MCF 10A (cell line): ENCODE measurements at regions of chr14 and their contacts with region 1.

Region 1: GRCh38 chr14:21498553-21499526 is 12.3 kb downstream of the METTL3 start:
- DNase-seq: peak; percentile 44
- H3K4me3 Mint-ChIP-seq: no peak overlapping the region
- H3K27ac Mint-ChIP-seq: no peak overlapping the region
- H3K4me1 Mint-ChIP-seq: no peaks in the 10 kb centered on the region
- H3K27me3 Mint-ChIP-seq: no peaks in the 10 kb centered on the region
- CTCF ChIP-seq: peak; percentile 42

Region 2: GRCh38 chr14:21476925-21477681 is 21.7 kb before region 1 on chr14 and contains the starts of genes RAB2B and TOX4:
- CTCF ChIA-PET with region 1: interaction called, 57 read pairs
- POLR2A ChIA-PET with region 1: interaction called, 29 read pairs
- intact Hi-C with region 1: no loop called
- DNase-seq: peak; percentile 99
- H3K4me3 Mint-ChIP-seq: peak within 1 kb of the TSS; percentile 87
- H3K27ac Mint-ChIP-seq: peak within 1 kb of the TSS; percentile 98
- H3K4me1 Mint-ChIP-seq: no peaks in the 10 kb centered on the region
- H3K27me3 Mint-ChIP-seq: no peaks in the 10 kb centered on the region
- CTCF ChIP-seq: peak; percentile 90
- total RNA-seq, gene RAB2B: 22.8 and 23.3 TPM in 2 replicates
- total RNA-seq, gene TOX4: 84.1 and 105 TPM in 2 replicates

Region 3: GRCh38 chr14:21486640-21487087 is 12.2 kb before region 1 on chr14:
- CTCF ChIA-PET with region 1: interaction called, 28 read pairs
- POLR2A ChIA-PET with region 1: interaction called, 6 read pairs
- intact Hi-C with region 1: no loop called
- DNase-seq: no peak
- H3K4me3 Mint-ChIP-seq: no peak overlapping the region
- H3K27ac Mint-ChIP-seq: no peak overlapping the region
- H3K4me1 Mint-ChIP-seq: no peaks in the 10 kb centered on the region
- H3K27me3 Mint-ChIP-seq: no peaks in the 10 kb centered on the region
- CTCF ChIP-seq: no peak

Region 4: DNA sequence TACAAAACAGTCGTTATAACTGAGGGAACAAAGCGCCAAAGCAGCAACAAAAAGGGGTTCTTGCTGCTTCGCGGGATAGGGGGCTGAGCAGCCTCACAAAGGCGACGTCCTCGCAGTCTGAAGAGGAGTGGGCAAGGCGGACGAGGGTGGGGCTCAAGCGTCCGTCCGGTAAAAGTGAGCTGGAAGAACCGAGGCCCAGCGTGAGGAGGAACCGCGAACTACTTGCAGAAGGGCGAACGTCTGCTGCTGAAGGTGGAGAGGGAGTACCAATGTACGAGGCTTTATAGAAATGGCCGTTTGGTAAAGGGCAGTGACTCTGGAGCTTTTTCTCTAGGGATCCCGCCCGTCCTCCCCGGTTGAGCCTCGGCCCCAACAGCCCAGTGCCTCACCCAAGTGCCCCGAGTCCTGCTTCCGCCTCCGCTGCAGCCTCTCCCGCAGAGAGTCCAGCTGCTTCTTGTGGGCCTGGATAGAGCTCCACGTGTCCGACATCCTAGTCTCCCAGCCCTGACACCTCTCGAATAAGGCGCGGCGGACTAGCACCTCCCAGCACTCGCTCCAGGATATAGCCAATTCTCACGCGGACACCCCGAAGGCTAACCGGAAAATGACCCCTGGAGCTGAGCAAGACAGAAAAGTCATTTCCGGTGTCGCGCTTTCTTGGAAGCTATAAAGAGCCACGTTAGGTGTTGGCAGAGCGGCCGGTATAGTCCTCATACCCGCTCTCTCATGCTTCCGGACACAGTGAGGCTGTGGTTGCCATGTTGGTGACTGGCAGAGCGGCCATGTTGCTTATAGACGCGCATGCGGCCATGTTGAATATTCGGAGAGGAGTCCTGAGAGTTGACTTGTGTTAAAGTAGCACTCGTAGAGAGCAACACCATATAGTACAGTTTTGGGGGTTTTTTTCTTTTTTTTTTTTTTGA is 12.2 kb after region 1 on chr14 and contains the start of gene METTL3:
- CTCF ChIA-PET with region 1: interaction called, 57 read pairs
- POLR2A ChIA-PET with region 1: interaction called, 23 read pairs
- intact Hi-C with region 1: no loop called
- DNase-seq: peak; percentile 99
- H3K4me3 Mint-ChIP-seq: peak within 1 kb of the TSS; percentile 96
- H3K27ac Mint-ChIP-seq: peak within 1 kb of the TSS; percentile 95
- H3K4me1 Mint-ChIP-seq: peaks cover 13% of the 10 kb centered on the region
- H3K27me3 Mint-ChIP-seq: no peaks in the 10 kb centered on the region
- CTCF ChIP-seq: no peak
- total RNA-seq, gene METTL3: 36.4 and 46.7 TPM in 2 replicates

Region 5: DNA sequence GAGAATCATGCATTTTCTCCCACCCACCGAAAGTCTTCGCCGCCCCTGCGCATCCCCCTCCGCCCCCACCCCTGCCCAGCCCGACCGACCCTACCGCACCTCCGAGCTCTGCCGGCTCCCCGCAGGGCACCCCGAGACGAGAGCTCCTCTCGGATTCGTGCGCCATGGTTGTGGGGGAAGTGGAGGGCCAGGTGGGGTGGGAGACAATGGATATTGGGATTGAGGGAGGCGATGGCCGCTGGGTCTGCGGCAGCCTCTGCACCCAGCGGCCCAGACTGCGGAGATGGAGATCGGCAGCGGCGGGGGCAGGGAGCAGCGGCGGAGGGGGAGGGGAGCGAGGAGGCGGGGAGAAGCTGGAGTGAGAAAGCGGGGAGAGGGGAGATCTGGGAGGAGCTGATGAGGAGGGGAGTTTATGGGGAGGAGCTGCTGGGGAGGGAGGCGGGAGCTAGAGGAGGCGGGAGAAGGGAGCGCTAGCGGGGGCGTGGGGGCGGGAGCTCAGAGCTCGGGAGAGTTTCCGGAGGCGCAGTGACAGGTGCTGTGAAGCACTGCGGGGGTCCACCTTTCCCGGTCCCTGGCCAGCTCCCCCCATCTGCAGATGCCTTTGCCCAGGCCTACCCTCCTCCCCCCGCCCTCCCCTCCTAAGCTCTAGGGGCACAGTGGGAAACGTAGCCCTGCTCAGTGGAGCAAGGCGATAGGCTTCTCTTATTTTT is 27.3 kb after region 1 on chr14 and contains the start of gene SALL2:
- CTCF ChIA-PET with region 1: interaction called, 12 read pairs
- POLR2A ChIA-PET with region 1: no interaction called
- intact Hi-C with region 1: no loop called
- DNase-seq: no peak
- H3K4me3 Mint-ChIP-seq: peak within 1 kb of the TSS; percentile 33
- H3K27ac Mint-ChIP-seq: no peak within 1 kb of the TSS
- H3K4me1 Mint-ChIP-seq: no peaks in the 10 kb centered on the region
- H3K27me3 Mint-ChIP-seq: peaks cover 22% of the 10 kb centered on the region
- CTCF ChIP-seq: no peak
- total RNA-seq, gene SALL2: 0.05 and 0.09 TPM in 2 replicates

Region 6: GRCh38 chr14:21557084-21557901 is 58.5 kb after region 1 on chr14:
- CTCF ChIA-PET with region 1: interaction called, 88 read pairs
- POLR2A ChIA-PET with region 1: interaction called, 14 read pairs
- intact Hi-C with region 1: loop called (anchors 1 kb)
- DNase-seq: peak; percentile 84
- H3K4me3 Mint-ChIP-seq: peak overlapping the region; percentile 45
- H3K27ac Mint-ChIP-seq: no peak overlapping the region
- H3K4me1 Mint-ChIP-seq: peaks cover 7% of the 10 kb centered on the region
- H3K27me3 Mint-ChIP-seq: no peaks in the 10 kb centered on the region
- CTCF ChIP-seq: peak; percentile 70

Region 7: DNA sequence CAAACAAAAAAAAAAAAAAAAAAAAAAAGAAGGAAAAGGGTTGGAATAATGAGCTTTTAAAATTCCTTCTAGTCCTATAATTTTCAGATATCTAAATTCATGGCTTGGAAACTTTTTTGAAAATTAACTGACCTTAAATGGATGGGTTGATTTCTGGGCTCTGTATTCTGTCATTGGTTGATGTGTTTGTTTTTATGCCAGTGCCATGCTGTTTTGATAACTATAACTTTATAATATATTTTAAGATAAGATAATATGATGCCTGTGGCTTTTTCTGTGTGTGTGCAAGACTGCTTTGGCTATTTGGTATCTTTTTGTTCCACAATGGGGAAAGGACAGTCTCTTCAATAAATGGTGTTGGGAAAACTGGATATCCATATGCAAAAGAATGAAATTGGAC is 73.8 kb after region 1 on chr14:
- CTCF ChIA-PET with region 1: interaction called, 11 read pairs
- POLR2A ChIA-PET with region 1: no interaction called
- intact Hi-C with region 1: no loop called
- DNase-seq: no peak
- H3K4me3 Mint-ChIP-seq: no peak overlapping the region
- H3K27ac Mint-ChIP-seq: no peak overlapping the region
- H3K4me1 Mint-ChIP-seq: no peaks in the 10 kb centered on the region
- H3K27me3 Mint-ChIP-seq: peaks cover 38% of the 10 kb centered on the region
- CTCF ChIP-seq: no peak

Region 8: GRCh38 chr14:21652209-21652808 is 153.5 kb after region 1 on chr14:
- CTCF ChIA-PET with region 1: no interaction called
- POLR2A ChIA-PET with region 1: no interaction called
- intact Hi-C with region 1: no loop called
- DNase-seq: no peak
- H3K4me3 Mint-ChIP-seq: no peak overlapping the region
- H3K27ac Mint-ChIP-seq: no peak overlapping the region
- H3K4me1 Mint-ChIP-seq: no peaks in the 10 kb centered on the region
- H3K27me3 Mint-ChIP-seq: peaks cover 49% of the 10 kb centered on the region
- CTCF ChIP-seq: no peak

Region 9: DNA sequence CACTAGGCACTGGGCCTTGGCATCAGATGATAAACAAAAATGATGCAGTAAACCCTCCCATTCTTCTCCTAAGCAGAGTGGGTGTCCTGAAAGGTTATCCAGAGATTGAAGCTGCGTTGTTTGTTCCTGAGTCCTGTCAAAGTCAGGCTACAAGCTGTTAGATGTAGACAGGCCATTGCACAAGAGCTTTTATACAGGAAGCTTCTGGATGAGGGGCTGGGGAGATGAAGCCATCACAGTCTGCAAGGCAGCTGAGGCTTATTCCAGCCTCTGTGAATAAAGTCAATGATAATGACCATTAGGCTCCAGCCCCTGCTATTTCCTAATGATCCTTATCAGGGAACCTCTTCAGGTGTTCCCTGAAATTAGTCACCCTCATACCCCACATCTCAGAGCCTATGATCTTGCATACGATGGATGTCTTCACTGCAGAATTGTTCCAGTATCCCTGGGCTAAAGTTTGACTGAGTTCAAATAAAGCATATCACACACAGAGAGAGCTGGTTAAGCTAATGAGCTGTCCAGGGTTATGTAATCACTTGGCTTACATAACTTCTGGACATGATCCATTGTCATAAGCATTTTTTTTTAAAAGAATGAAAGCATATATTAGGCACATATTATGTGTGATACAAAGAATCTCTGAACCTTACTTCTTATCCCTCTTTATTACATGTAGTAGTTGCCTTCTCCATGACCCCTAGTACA is 511.9 kb after region 1 on chr14:
- CTCF ChIA-PET with region 1: no interaction called
- POLR2A ChIA-PET with region 1: no interaction called
- intact Hi-C with region 1: no loop called
- DNase-seq: no peak
- H3K4me3 Mint-ChIP-seq: no peak overlapping the region
- H3K27ac Mint-ChIP-seq: no peak overlapping the region
- H3K4me1 Mint-ChIP-seq: no peaks in the 10 kb centered on the region
- H3K27me3 Mint-ChIP-seq: peaks cover 64% of the 10 kb centered on the region
- CTCF ChIP-seq: no peak